Common myeloid progenitor, CD34-positive (primary cell): ENCODE measurements at regions of chr3 and their contacts with region 1.

Region 1: DNA sequence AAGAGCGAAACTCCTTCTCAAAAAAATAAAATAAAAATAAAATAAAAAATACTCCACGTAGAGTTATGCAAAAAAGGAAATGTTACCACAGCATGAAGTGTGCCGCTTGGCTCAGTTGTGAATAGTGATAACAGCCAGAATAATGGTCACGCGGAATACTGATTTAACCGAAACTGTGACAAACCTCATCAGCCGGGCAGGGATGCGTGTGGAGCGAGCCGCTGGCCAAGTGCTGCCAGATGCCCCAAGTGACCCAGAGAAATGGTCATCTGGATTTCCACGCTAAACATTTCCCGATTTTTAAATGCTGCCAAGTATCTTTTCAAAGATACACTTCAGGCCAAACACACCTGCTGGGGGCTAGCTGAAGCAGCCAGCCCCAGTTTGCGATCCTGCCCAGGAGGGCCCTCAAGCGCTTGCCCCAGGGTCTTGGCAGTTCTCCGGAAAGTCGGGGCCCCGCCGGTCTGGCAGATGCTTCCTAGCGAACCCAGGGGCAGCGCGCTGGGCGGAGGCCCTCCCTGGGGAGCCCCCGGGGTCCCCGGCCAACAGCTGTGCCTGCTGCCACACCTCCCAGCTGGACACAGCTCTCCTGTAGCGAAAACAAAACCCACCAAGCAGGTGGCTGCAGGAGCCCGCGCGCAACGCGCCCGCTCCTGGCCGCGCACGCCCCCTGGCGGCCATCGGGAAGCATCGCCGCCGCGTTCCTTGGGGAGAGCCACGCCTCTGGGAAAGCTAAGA is 35.1 kb downstream of the CMTM6 start:
- DNase-seq: peak; percentile 66 to 82 (median 78)
- H3K4me3 ChIP-seq: peak overlapping the region in 4 of 7 experiments; percentile 25 to 65 (median 62)
- H3K27ac ChIP-seq: no peak overlapping the region
- H3K4me1 ChIP-seq: peaks cover 0 to 28% (median 21%) of the 10 kb centered on the region in 4 experiments
- H3K27me3 ChIP-seq: no peaks in the 10 kb centered on the region

Region 2: DNA sequence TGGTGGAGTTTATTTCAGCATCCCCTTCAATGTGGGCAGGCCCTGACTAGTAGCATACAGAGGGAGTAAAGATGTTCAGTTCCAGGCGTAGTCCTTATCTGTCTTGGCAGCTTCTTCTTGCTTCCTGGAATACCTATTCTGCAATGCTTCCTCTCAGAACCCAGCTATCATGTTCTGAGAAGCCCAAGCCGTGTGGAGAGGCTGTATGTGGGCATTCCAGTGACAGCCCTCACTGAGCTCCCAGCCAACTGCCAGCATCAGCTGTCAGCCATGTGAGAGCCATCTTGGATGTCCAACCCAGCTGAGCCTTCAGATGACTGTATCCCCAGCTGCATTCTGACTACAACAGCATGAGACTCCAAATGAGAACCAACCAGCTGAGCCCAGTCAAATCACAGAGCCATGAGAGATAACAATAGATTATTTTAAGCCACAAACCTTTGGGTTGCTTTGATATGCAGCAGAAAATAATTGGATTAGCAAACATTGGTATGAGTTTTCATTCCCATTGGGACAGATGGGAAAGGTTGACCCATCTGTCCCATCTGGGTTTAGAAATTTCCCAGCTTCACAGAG is 84.3 kb before region 1 on chr3:
- CTCF ChIA-PET with region 1: interaction called, 116 read pairs
- POLR2A ChIA-PET with region 1: no interaction called
- DNase-seq: peak in 2 of 3 donors; percentile 78 to 79
- H3K4me3 ChIP-seq: no peak overlapping the region
- H3K27ac ChIP-seq: no peak overlapping the region
- H3K4me1 ChIP-seq: peaks cover 0 to 8% (median 3%) of the 10 kb centered on the region in 4 experiments
- H3K27me3 ChIP-seq: no peaks in the 10 kb centered on the region

Region 3: GRCh38 chr3:32401556-32402081 is 65.9 kb before region 1 on chr3:
- CTCF ChIA-PET with region 1: interaction called, 13 read pairs
- POLR2A ChIA-PET with region 1: no interaction called
- DNase-seq: peak; percentile 80 to 98 (median 97)
- H3K4me3 ChIP-seq: peak overlapping the region in 5 of 7 experiments; percentile 23 to 69 (median 64)
- H3K27ac ChIP-seq: peak overlapping the region; percentile 84 to 91
- H3K4me1 ChIP-seq: peaks cover 25 to 90% (median 64%) of the 10 kb centered on the region in 4 experiments
- H3K27me3 ChIP-seq: no peaks in the 10 kb centered on the region

Region 4: GRCh38 chr3:32428092-32429068 is 39.1 kb before region 1 on chr3:
- CTCF ChIA-PET with region 1: interaction called, 51 read pairs
- POLR2A ChIA-PET with region 1: interaction called, 3 read pairs
- DNase-seq: peak; percentile 17 to 75 (median 64)
- H3K4me3 ChIP-seq: peak overlapping the region in 4 of 7 experiments; percentile 8 to 28 (median 24)
- H3K27ac ChIP-seq: peak overlapping the region; percentile 17 to 73
- H3K4me1 ChIP-seq: peaks cover 13 to 84% (median 56%) of the 10 kb centered on the region in 4 experiments
- H3K27me3 ChIP-seq: no peaks in the 10 kb centered on the region

Region 5: GRCh38 chr3:32480604-32481003 is 13.1 kb after region 1 on chr3:
- CTCF ChIA-PET with region 1: interaction called, 13 read pairs
- POLR2A ChIA-PET with region 1: no interaction called
- DNase-seq: no peak
- H3K4me3 ChIP-seq: no peak overlapping the region
- H3K27ac ChIP-seq: no peak overlapping the region
- H3K4me1 ChIP-seq: peaks cover 0 to 8% (median 1%) of the 10 kb centered on the region in 4 experiments
- H3K27me3 ChIP-seq: no peaks in the 10 kb centered on the region